ENCODE measurements at regions of chr20 and their contacts with region 1.

Region 1: DNA sequence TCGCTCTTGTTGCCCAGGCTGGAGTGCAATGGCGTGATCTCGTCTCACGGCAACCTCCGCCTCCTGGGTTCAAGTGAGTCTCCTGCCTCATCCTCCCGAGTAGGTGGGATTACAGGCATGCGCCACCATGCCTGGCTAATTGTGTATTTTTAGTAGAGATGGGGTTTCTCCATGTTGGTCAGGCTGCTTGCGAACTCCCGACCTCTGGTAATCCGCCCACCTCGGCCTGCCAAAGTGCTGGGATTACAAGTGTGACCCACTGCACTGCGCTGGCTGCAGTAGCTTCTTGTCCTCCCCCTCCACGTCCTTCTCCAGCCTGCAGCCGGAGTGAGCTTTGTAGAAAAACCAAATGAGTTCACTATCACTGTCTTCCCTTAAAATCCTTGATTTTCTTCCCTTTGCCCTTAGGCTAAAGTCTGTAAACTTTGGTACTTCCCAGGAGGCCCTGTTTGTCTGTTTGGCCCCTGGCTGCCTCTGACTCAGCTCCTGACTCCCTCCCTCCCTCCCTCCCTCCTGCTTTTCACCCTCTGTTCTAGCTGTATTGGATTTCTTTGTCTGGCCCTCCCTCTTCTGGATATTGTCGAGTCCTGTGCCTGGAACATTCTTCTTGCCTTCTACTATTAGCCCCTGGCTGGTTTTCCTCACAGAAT is 12.9 kb downstream of the PARD6B start:
- DNase-seq: peak; percentile 52 to 85 (median 67)
- ATAC-seq: peak; percentile 84
- H3K4me3 ChIP-seq: no peak overlapping the region
- H3K27ac ChIP-seq: peak overlapping the region; percentile 81
- H3K4me1 ChIP-seq: peaks cover 30 to 31% of the 10 kb centered on the region in 2 experiments
- H3K27me3 ChIP-seq: no peaks in the 10 kb centered on the region
- CTCF ChIP-seq: peak; percentile 43 to 74 (median 57); a peak in 5 of 6 replicates
- EP300 ChIP-seq: no peak
- POLR2A ChIP-seq: no peak; the same call in 1 of the 2 replicates
- RAD21 ChIP-seq: peak; percentile 47 to 68

Region 2: GRCh38 chr20:50625986-50626677 is 118.1 kb before region 1 on chr20:
- CTCF ChIA-PET with region 1: interaction called, 12 read pairs
- POLR2A ChIA-PET with region 1: interaction called, 4 read pairs
- in situ Hi-C with region 1: no loop called
- intact Hi-C with region 1: loop called (anchors 2 kb)
- DNase-seq: peak; percentile 68 to 78 (median 73)
- ATAC-seq: peak; percentile 91
- H3K4me3 ChIP-seq: no peak overlapping the region
- H3K27ac ChIP-seq: no peak overlapping the region
- H3K4me1 ChIP-seq: peaks cover 0 to 31% of the 10 kb centered on the region in 2 experiments; a peak in 3 of 5 replicates
- H3K27me3 ChIP-seq: no peaks in the 10 kb centered on the region
- CTCF ChIP-seq: peak; percentile 83 to 87 (median 83)
- EP300 ChIP-seq: no peak
- POLR2A ChIP-seq: no peak
- RAD21 ChIP-seq: peak; percentile 78 to 95

Region 3: GRCh38 chr20:50663095-50663850 is 81.0 kb before region 1 on chr20:
- CTCF ChIA-PET with region 1: interaction called, 8 read pairs
- POLR2A ChIA-PET with region 1: interaction called, 4 read pairs
- in situ Hi-C with region 1: no loop called
- intact Hi-C with region 1: loop called (anchors 5 kb)
- DNase-seq: peak in 1 of 4 experiments; percentile 40
- ATAC-seq: peak; percentile 40
- H3K4me3 ChIP-seq: no peak overlapping the region
- H3K27ac ChIP-seq: no peak overlapping the region
- H3K4me1 ChIP-seq: peaks cover 47 to 53% of the 10 kb centered on the region in 2 experiments
- H3K27me3 ChIP-seq: no peaks in the 10 kb centered on the region
- CTCF ChIP-seq: peak; percentile 41 to 56 (median 47); a peak in 4 of 6 replicates
- EP300 ChIP-seq: no peak
- POLR2A ChIP-seq: no peak
- RAD21 ChIP-seq: peak; percentile 53 to 70